Prostate gland (tissue), 2 donors: ENCODE measurements at regions of chr3 and their contacts with region 1.

Region 1: GRCh38 chr3:98445949-98446406 is 17.0 kb upstream of the OR5K1 start:
- DNase-seq: no peak
- H3K4me3 ChIP-seq: no peak overlapping the region
- H3K27ac ChIP-seq: no peak overlapping the region
- H3K4me1 ChIP-seq: no peaks in the 10 kb centered on the region
- H3K27me3 ChIP-seq: no peaks in the 10 kb centered on the region
- CTCF ChIP-seq: no peak
- POLR2A ChIP-seq: no peak

Region 2: GRCh38 chr3:98209244-98209643 is 236.7 kb before region 1 on chr3:
- intact Hi-C with region 1: no loop called
- DNase-seq: no peak
- H3K4me3 ChIP-seq: no peak overlapping the region
- H3K27ac ChIP-seq: no peak overlapping the region
- H3K4me1 ChIP-seq: no peaks in the 10 kb centered on the region
- H3K27me3 ChIP-seq: no peaks in the 10 kb centered on the region
- CTCF ChIP-seq: no peak
- POLR2A ChIP-seq: no peak

Region 3: DNA sequence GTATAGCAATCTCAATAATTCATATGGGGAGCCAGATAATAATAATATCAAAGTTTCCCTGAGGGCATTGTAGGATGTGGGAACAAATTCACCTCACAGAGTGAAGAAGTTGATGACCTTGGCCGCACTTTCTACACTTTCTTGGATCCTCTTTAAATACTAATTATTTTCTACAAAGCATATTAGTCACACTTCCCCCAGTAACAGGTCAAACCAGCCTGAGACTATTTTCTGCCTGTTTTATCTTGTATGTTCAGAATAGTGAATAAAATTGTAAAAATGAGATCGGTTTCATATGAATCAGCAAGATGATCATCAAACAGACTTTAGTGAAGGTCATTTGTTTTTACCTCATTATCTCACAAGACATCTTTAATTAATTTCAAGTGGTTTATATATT is 57.8 kb before region 1 on chr3:
- intact Hi-C with region 1: loop called (anchors 10 kb)
- DNase-seq: no peak
- H3K4me3 ChIP-seq: no peak overlapping the region
- H3K27ac ChIP-seq: no peak overlapping the region
- H3K4me1 ChIP-seq: no peaks in the 10 kb centered on the region
- H3K27me3 ChIP-seq: no peaks in the 10 kb centered on the region
- CTCF ChIP-seq: no peak
- POLR2A ChIP-seq: no peak

Region 4: DNA sequence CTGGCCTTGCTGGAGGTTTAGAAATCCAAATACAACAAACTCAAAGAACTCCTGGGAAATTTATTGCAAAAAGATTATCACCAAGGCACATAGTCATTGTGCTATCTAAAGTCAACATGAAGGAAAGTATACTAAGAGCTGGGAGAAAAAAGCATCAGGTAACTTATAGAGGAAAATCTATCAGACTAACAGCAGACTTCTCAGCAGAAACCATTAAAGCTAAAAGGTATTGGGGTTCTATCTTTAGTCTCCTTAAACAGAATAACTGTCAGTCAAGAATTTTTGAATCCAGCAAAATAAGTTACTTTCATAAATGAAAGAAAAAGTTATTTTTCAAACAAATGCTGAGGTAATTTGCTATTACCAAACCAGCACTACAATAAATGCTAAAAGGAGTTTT is 47.5 kb before region 1 on chr3:
- intact Hi-C with region 1: no loop called
- DNase-seq: no peak
- H3K4me3 ChIP-seq: no peak overlapping the region
- H3K27ac ChIP-seq: no peak overlapping the region
- H3K4me1 ChIP-seq: no peaks in the 10 kb centered on the region
- H3K27me3 ChIP-seq: no peaks in the 10 kb centered on the region
- CTCF ChIP-seq: no peak
- POLR2A ChIP-seq: no peak